H1 (cell line): ENCODE measurements at regions of chr4 and their contacts with region 1.

Region 1: GRCh38 chr4:150242820-150243458 is 164.7 kb downstream of the DCLK2 start:
- DNase-seq: no peak
- H3K4me3 ChIP-seq: no peak overlapping the region
- H3K27ac ChIP-seq: no peak overlapping the region
- H3K4me1 ChIP-seq: peaks cover 0 to 2% (median 0%) of the 10 kb centered on the region in 4 experiments; a peak in 1 of 7 replicates
- H3K27me3 ChIP-seq: no peaks in the 10 kb centered on the region
- CTCF ChIP-seq: peak; percentile 73 to 91 (median 83)
- EP300 ChIP-seq: no peak
- POLR2A ChIP-seq: no peak
- RAD21 ChIP-seq: peak; percentile 90

Region 2: GRCh38 chr4:149987330-149988086 is 255.4 kb before region 1 on chr4:
- CTCF ChIA-PET with region 1: interaction called, 14 read pairs
- POLR2A ChIA-PET with region 1: no interaction called
- DNase-seq: no peak
- H3K4me3 ChIP-seq: no peak overlapping the region
- H3K27ac ChIP-seq: no peak overlapping the region
- H3K4me1 ChIP-seq: 0 out of 7 replicates have a peak, but pooled peaks cover 0 to 3% (median 0%) of the 10 kb centered on the region in 4 experiments
- H3K27me3 ChIP-seq: no peaks in the 10 kb centered on the region
- CTCF ChIP-seq: no peak
- EP300 ChIP-seq: no peak
- POLR2A ChIP-seq: no peak
- RAD21 ChIP-seq: no peak

Region 3: GRCh38 chr4:150010525-150011126 is 232.3 kb before region 1 on chr4:
- CTCF ChIA-PET with region 1: interaction called, 53 read pairs
- POLR2A ChIA-PET with region 1: no interaction called
- DNase-seq: no peak
- H3K4me3 ChIP-seq: no peak overlapping the region
- H3K27ac ChIP-seq: no peak overlapping the region
- H3K4me1 ChIP-seq: peaks cover 0 to 2% (median 0%) of the 10 kb centered on the region in 4 experiments; a peak in 1 of 7 replicates
- H3K27me3 ChIP-seq: no peaks in the 10 kb centered on the region; a peak in 1 of 7 replicates
- CTCF ChIP-seq: peak in 2 of 3 experiments; percentile 51 to 56; a peak in 3 of 4 replicates
- EP300 ChIP-seq: no peak
- POLR2A ChIP-seq: no peak
- RAD21 ChIP-seq: peak; percentile 67 to 71

Region 4: GRCh38 chr4:150115851-150116250 is 127.1 kb before region 1 on chr4:
- CTCF ChIA-PET with region 1: no interaction called
- POLR2A ChIA-PET with region 1: no interaction called
- DNase-seq: no peak
- H3K4me3 ChIP-seq: no peak overlapping the region
- H3K27ac ChIP-seq: no peak overlapping the region
- H3K4me1 ChIP-seq: no peaks in the 10 kb centered on the region
- H3K27me3 ChIP-seq: no peaks in the 10 kb centered on the region
- CTCF ChIP-seq: no peak
- EP300 ChIP-seq: no peak
- POLR2A ChIP-seq: no peak
- RAD21 ChIP-seq: no peak

Region 5: DNA sequence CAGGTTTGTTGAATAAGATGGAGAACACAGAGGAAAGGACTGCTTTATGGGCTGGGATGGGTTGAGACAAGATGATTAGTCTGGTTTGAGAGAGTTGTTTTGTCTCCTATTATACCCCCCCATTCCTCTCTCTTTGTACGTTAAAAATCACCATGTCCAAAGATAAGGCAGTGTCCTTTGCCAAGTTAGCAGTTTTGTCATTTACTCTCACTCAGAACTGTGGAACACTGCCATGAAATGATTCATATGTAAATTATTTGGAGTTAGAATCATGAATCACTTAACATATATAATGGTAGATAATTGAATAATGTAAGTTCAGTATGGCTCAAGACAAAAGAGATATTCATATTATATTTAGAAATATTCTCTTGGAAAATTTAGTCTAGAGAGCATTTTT is 13.4 kb before region 1 on chr4:
- CTCF ChIA-PET with region 1: interaction called, 22 read pairs
- POLR2A ChIA-PET with region 1: no interaction called
- DNase-seq: no peak
- H3K4me3 ChIP-seq: no peak overlapping the region
- H3K27ac ChIP-seq: no peak overlapping the region
- H3K4me1 ChIP-seq: peaks cover 0 to 14% (median under 1%) of the 10 kb centered on the region in 4 experiments; a peak in 3 of 7 replicates
- H3K27me3 ChIP-seq: no peaks in the 10 kb centered on the region
- CTCF ChIP-seq: no peak
- EP300 ChIP-seq: no peak
- POLR2A ChIP-seq: no peak
- RAD21 ChIP-seq: no peak